Caco-2 (cell line): ENCODE measurements at regions of chr5 and their contacts with region 1.

Region 1: GRCh38 chr5:140372971-140373487 is 13.0 kb downstream of the SLC4A9 start:
- DNase-seq: peak; percentile 76 to 78
- H3K4me3 ChIP-seq: no peak overlapping the region
- H3K4me3 Mint-ChIP-seq: no peak overlapping the region
- H3K27ac Mint-ChIP-seq: no peak overlapping the region
- H3K4me1 ChIP-seq: no peaks in the 10 kb centered on the region
- H3K4me1 Mint-ChIP-seq: peaks cover 16% of the 10 kb centered on the region
- H3K27me3 ChIP-seq: no peaks in the 10 kb centered on the region
- H3K27me3 Mint-ChIP-seq: no peaks in the 10 kb centered on the region
- CTCF ChIP-seq: peak; percentile 86

Region 2: GRCh38 chr5:140261403-140262171 is 111.4 kb before region 1 on chr5:
- CTCF ChIA-PET with region 1: no interaction called
- POLR2A ChIA-PET with region 1: no interaction called
- intact Hi-C with region 1: no loop called
- DNase-seq: peak; percentile 73 to 76
- H3K4me3 ChIP-seq: no peak overlapping the region
- H3K4me3 Mint-ChIP-seq: peak overlapping the region; percentile 12
- H3K27ac Mint-ChIP-seq: peak overlapping the region; percentile 64
- H3K4me1 ChIP-seq: peaks cover 11% of the 10 kb centered on the region
- H3K4me1 Mint-ChIP-seq: peaks cover 35% of the 10 kb centered on the region
- H3K27me3 ChIP-seq: no peaks in the 10 kb centered on the region
- H3K27me3 Mint-ChIP-seq: no peaks in the 10 kb centered on the region
- CTCF ChIP-seq: peak in 1 of 2 experiments; percentile 11

Region 3: DNA sequence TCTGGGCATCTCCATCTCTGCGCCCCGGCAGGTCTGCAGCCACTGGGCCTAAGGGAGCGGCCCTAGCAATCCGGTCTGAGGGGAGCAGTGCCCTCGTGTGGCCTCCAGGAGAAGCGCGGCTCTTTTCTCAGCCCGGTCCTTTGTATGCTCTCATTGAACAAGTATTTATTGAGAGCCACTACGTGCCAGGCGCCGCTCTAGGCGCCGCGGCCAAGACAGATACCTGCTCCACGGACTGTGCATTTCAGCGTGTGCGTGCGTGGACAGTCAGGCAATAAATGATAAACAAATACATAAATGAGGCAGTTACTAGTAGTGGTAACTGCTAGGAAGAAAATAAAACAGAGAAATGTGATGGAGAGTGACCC is 15.3 kb before region 1 on chr5:
- CTCF ChIA-PET with region 1: interaction called, 11 read pairs
- POLR2A ChIA-PET with region 1: no interaction called
- intact Hi-C with region 1: no loop called
- DNase-seq: peak; percentile 88
- H3K4me3 ChIP-seq: no peak overlapping the region; the same call in 1 of the 2 replicates
- H3K4me3 Mint-ChIP-seq: peak overlapping the region; percentile 58
- H3K27ac Mint-ChIP-seq: peak overlapping the region; percentile 87
- H3K4me1 ChIP-seq: peaks cover 26% of the 10 kb centered on the region
- H3K4me1 Mint-ChIP-seq: peaks cover 22% of the 10 kb centered on the region
- H3K27me3 ChIP-seq: no peaks in the 10 kb centered on the region
- H3K27me3 Mint-ChIP-seq: no peaks in the 10 kb centered on the region
- CTCF ChIP-seq: peak; percentile 87 to 96

Region 4: DNA sequence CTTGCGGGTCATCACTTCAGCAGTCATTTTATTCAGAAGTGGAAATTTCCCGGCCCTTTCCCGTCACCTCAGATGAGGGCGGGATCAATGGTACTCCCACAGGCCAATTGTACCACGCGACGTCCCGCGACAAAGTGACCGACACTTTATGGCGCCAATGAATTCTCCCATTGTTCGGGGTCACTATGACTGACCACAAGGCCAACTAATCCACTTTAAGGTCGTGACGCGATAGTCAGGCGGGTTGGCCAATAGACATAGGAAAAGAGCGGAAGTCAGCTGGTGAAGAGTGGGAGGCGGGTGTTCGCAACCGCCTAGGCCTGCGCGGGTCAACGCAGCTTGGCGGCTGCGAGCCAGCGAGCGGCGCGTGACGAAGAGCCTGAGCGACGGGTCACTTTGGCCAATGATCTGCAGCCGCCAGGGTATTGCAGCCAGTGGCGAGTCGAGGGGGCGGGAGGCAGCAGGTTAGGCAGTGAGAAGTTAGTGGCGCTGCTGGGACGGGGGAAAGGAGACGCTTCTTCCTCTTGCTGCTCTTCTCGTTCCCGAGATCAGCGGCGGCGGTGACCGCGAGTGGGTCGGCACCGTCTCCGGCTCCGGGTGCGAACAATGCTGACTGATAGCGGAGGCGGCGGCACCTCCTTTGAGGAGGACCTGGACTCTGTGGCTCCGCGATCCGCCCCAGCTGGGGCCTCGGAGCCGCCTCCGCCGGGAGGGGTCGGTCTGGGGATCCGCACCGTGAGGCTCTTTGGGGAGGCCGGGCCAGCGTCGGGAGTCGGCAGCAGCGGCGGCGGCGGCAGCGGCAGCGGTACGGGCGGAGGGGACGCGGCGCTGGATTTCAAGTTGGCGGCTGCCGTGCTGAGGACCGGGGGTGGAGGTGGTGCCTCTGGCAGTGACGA is 28.6 kb after region 1 on chr5 and contains the start of gene ANKHD1:
- CTCF ChIA-PET with region 1: interaction called, 6 read pairs
- POLR2A ChIA-PET with region 1: interaction called, 3 read pairs
- intact Hi-C with region 1: loop called (anchors 2 kb)
- DNase-seq: peak; percentile 99 to 100
- H3K4me3 ChIP-seq: peak within 1 kb of the TSS; percentile 72
- H3K4me3 Mint-ChIP-seq: no peak within 1 kb of the TSS
- H3K27ac Mint-ChIP-seq: no peak within 1 kb of the TSS
- H3K4me1 ChIP-seq: no peaks in the 10 kb centered on the region
- H3K4me1 Mint-ChIP-seq: peaks cover 7% of the 10 kb centered on the region
- H3K27me3 ChIP-seq: no peaks in the 10 kb centered on the region
- H3K27me3 Mint-ChIP-seq: no peaks in the 10 kb centered on the region
- CTCF ChIP-seq: no peak
- total RNA-seq, gene ANKHD1: 130 and 134 TPM in 2 replicates

Region 5: GRCh38 chr5:140481758-140482157 is 108.7 kb after region 1 on chr5:
- CTCF ChIA-PET with region 1: no interaction called
- POLR2A ChIA-PET with region 1: no interaction called
- intact Hi-C with region 1: loop called (anchors 5 kb)
- DNase-seq: no peak
- H3K4me3 ChIP-seq: no peak overlapping the region
- H3K4me3 Mint-ChIP-seq: no peak overlapping the region
- H3K27ac Mint-ChIP-seq: no peak overlapping the region
- H3K4me1 ChIP-seq: no peaks in the 10 kb centered on the region
- H3K4me1 Mint-ChIP-seq: no peaks in the 10 kb centered on the region
- H3K27me3 ChIP-seq: no peaks in the 10 kb centered on the region
- H3K27me3 Mint-ChIP-seq: no peaks in the 10 kb centered on the region
- CTCF ChIP-seq: no peak

Region 6: GRCh38 chr5:140547508-140548299 is 174.7 kb after region 1 on chr5 and contains the start of gene EIF4EBP3:
- CTCF ChIA-PET with region 1: interaction called, 4 read pairs
- POLR2A ChIA-PET with region 1: no interaction called
- intact Hi-C with region 1: loop called (anchors 2 kb)
- DNase-seq: peak; percentile 97
- H3K4me3 ChIP-seq: peak within 1 kb of the TSS; percentile 38
- H3K4me3 Mint-ChIP-seq: peak within 1 kb of the TSS; percentile 69
- H3K27ac Mint-ChIP-seq: peak within 1 kb of the TSS; percentile 88
- H3K4me1 ChIP-seq: peaks cover 13% of the 10 kb centered on the region
- H3K4me1 Mint-ChIP-seq: peaks cover 19% of the 10 kb centered on the region
- H3K27me3 ChIP-seq: no peaks in the 10 kb centered on the region
- H3K27me3 Mint-ChIP-seq: no peaks in the 10 kb centered on the region
- CTCF ChIP-seq: peak; percentile 37 to 48
- total RNA-seq, gene EIF4EBP3: 7.6 and 8.0 TPM in 2 replicates

Region 7: DNA sequence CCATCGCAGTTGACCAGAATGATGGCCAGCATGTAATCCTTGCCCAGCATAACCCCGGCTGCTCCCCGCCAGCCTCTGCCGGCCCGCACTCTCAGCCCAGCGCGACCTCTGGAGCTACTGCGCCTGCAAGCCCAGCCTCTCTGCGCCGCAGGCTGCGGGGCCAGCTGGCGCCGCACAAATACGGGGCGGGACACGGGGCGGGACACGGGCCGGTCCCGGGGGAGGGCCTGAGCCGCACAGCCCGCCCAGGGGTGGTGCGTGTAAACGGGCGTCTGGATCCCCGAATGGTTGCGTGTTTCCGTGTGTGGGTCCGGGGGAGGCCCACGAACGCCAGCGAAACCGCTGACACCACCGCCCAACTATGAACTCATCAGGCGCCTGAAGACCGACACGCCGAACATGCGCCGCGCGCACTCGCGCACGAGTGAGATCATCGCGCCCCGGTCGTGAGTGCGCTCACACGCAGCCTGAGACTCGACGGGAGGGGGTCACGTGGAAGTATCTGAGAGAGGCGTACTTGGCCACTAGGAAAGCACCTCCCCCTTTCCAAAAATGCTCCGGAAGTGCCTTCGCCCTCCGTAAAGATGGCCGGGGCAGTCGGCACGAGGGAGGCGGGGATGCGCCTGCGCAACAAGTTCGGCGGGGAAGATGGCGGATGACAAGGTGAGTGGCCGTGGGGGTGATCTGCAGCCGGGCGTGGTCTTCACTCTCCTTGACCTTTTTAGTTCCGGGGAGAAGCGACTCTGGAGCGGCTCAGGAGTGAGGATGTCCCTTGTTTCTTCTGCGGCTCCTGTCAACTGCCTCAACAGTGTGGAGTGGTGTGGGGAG is 191.4 kb after region 1 on chr5 and contains the starts of genes APBB3 and SLC35A4:
- CTCF ChIA-PET with region 1: no interaction called
- POLR2A ChIA-PET with region 1: no interaction called
- intact Hi-C with region 1: no loop called
- DNase-seq: peak; percentile 96 to 98
- H3K4me3 ChIP-seq: peak within 1 kb of the TSS; percentile 68
- H3K4me3 Mint-ChIP-seq: peak within 1 kb of the TSS; percentile 84
- H3K27ac Mint-ChIP-seq: peak within 1 kb of the TSS; percentile 93
- H3K4me1 ChIP-seq: peaks cover 7% of the 10 kb centered on the region; the same call in 1 of the 2 replicates
- H3K4me1 Mint-ChIP-seq: peaks cover 6% of the 10 kb centered on the region
- H3K27me3 ChIP-seq: no peaks in the 10 kb centered on the region
- H3K27me3 Mint-ChIP-seq: no peaks in the 10 kb centered on the region
- CTCF ChIP-seq: no peak
- total RNA-seq, gene APBB3: 23.4 and 25.1 TPM in 2 replicates
- total RNA-seq, gene SLC35A4: 79.5 and 91.3 TPM in 2 replicates

Region 8: DNA sequence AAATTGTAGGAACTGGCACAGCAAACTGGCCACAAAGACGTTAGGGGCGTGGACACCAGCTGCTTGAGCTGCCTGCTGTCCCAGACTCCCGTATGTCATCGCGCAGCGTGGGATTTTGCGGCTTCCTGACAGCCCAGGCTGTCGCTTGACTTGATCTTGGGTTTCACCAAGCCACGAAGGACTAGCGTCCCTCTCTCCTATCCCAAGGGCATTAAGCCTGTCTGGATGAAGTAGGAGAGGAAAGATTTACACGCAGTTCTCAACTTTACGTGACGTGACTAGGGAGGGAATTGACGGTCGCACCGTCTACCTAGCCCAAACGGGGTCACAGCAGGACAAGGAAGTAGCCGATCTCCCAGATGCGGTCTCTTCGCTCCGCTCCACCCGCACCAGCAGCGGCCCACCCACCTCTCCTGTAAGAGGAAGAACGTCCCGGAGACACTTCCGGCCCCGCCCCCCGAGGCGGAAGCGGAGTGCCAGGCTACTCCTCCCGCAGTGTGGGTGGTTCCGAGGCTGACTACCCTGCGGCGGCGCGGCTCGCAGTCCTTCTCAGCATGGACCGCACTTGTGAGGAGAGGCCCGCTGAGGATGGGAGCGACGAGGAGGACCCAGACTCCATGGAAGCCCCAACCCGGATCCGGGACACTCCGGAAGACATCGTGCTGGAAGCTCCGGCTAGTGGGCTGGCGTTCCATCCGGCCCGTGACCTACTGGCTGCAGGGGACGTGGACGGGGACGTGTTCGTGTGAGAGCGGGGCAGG is 291.5 kb after region 1 on chr5 and contains the start of gene WDR55:
- CTCF ChIA-PET with region 1: no interaction called
- POLR2A ChIA-PET with region 1: no interaction called
- intact Hi-C with region 1: loop called (anchors 2 kb)
- DNase-seq: peak; percentile 97
- H3K4me3 ChIP-seq: peak within 1 kb of the TSS; percentile 86
- H3K4me3 Mint-ChIP-seq: peak within 1 kb of the TSS; percentile 98
- H3K27ac Mint-ChIP-seq: peak within 1 kb of the TSS; percentile 89
- H3K4me1 ChIP-seq: peaks cover 7% of the 10 kb centered on the region; the same call in 1 of the 2 replicates
- H3K4me1 Mint-ChIP-seq: peaks cover 14% of the 10 kb centered on the region
- H3K27me3 ChIP-seq: no peaks in the 10 kb centered on the region
- H3K27me3 Mint-ChIP-seq: no peaks in the 10 kb centered on the region
- CTCF ChIP-seq: no peak
- total RNA-seq, gene WDR55: 38.8 and 40.2 TPM in 2 replicates

Region 9: GRCh38 chr5:140718241-140718580 is 345.2 kb after region 1 on chr5:
- CTCF ChIA-PET with region 1: interaction called, 10 read pairs
- POLR2A ChIA-PET with region 1: no interaction called
- intact Hi-C with region 1: loop called (anchors 1 kb)
- DNase-seq: no peak
- H3K4me3 ChIP-seq: peak overlapping the region; percentile 41
- H3K4me3 Mint-ChIP-seq: peak overlapping the region; percentile 99
- H3K27ac Mint-ChIP-seq: peak overlapping the region; percentile 100
- H3K4me1 ChIP-seq: no peaks in the 10 kb centered on the region
- H3K4me1 Mint-ChIP-seq: peaks cover 15% of the 10 kb centered on the region
- H3K27me3 ChIP-seq: no peaks in the 10 kb centered on the region
- H3K27me3 Mint-ChIP-seq: peaks cover 8% of the 10 kb centered on the region
- CTCF ChIP-seq: no peak